ENCODE measurements at regions of chr1 and their contacts with region 1.

Region 1: GRCh38 chr1:226201029-226201593 is 14.6 kb upstream of the ACBD3 start:
- DNase-seq: peak; percentile 31
- ATAC-seq: no peak
- H3K4me3 Mint-ChIP-seq: no peak overlapping the region
- H3K27ac Mint-ChIP-seq: no peak overlapping the region
- H3K4me1 Mint-ChIP-seq: no peaks in the 10 kb centered on the region
- H3K27me3 Mint-ChIP-seq: peaks cover 2% of the 10 kb centered on the region

Region 2: DNA sequence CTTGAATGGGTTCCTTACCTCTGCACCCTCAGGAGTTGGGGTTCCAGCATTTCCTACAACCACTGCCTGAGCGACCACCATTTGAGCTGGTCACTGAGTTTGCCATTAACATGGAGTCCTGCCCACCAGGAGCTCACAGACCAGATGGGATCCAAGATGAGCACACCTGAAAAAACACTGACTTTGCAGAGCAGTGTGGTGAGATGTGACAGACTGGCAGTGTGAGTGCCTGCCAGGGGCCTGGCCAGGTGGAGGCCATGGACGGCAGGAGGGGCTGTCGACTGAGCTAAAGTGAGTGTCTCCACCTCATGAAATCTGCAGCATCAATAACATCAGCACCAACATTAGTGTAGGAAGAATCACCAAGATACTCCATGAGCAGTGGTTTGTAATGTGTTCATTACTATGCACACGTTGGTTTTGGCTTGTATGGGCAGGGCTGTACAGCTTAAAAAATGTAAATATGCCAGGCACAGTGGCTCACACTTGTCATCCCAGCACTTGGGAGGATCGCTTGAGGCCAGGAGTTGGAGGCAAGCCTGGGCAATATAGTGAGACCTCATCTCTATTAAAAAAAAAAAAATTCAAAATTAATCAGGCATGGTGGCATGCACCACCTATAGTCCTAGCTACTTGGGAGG is 10.2 kb after region 1 on chr1:
- CTCF ChIA-PET with region 1: interaction called, 12 read pairs
- POLR2A ChIA-PET with region 1: no interaction called
- intact Hi-C with region 1: no loop called
- DNase-seq: no peak
- ATAC-seq: no peak
- H3K4me3 Mint-ChIP-seq: no peak overlapping the region
- H3K27ac Mint-ChIP-seq: no peak overlapping the region
- H3K4me1 Mint-ChIP-seq: no peaks in the 10 kb centered on the region
- H3K27me3 Mint-ChIP-seq: no peaks in the 10 kb centered on the region

Region 3: DNA sequence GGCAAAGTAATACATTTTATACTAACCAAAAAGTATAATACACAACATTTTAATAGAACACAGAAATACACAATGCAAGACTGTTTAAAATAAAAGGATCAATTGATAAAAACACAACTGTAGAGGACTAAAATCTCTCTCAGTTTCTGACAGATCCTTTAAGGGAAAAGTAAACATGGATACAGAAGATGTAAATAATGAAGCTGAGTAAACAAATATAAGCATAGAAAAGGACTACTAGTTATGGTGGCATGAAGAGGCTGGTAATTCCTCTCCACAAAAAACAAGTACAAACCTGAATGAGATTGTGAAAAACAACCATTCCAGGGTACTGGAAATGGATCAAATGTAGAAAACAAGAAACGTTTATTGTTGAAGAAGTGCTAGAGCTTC is 68.0 kb after region 1 on chr1:
- CTCF ChIA-PET with region 1: no interaction called
- POLR2A ChIA-PET with region 1: no interaction called
- intact Hi-C with region 1: no loop called
- DNase-seq: no peak
- ATAC-seq: no peak
- H3K4me3 Mint-ChIP-seq: no peak overlapping the region
- H3K27ac Mint-ChIP-seq: no peak overlapping the region
- H3K4me1 Mint-ChIP-seq: peaks cover 3% of the 10 kb centered on the region
- H3K27me3 Mint-ChIP-seq: no peaks in the 10 kb centered on the region

Measured in activated CD4-positive, alpha-beta T cell treated with anti-CD3 and anti-CD28 coated beads for 36 hours (primary cell).